Naive thymus-derived CD4-positive, alpha-beta T cell (primary cell): ENCODE measurements at regions of chr2 and their contacts with region 1.

Region 1: GRCh38 chr2:203782262-203782976 is 76.0 kb downstream of the CD28 start:
- DNase-seq: peak in 8 of 9 donors; percentile 46 to 73 (median 64)
- ATAC-seq: peak; percentile 92
- H3K4me3 ChIP-seq: no peak overlapping the region
- H3K4me3 Mint-ChIP-seq: peak overlapping the region in 6 of 10 donors; percentile 39 to 63 (median 46)
- H3K27ac ChIP-seq: no peak overlapping the region
- H3K27ac Mint-ChIP-seq: peak overlapping the region; percentile 63 to 85 (median 81)
- H3K4me1 ChIP-seq: peaks cover 17 to 26% of the 10 kb centered on the region in 2 donors
- H3K4me1 Mint-ChIP-seq: peaks cover 11 to 64% (median 53%) of the 10 kb centered on the region in 7 donors
- H3K27me3 ChIP-seq: no peaks in the 10 kb centered on the region
- H3K27me3 Mint-ChIP-seq: no peaks in the 10 kb centered on the region

Region 2: DNA sequence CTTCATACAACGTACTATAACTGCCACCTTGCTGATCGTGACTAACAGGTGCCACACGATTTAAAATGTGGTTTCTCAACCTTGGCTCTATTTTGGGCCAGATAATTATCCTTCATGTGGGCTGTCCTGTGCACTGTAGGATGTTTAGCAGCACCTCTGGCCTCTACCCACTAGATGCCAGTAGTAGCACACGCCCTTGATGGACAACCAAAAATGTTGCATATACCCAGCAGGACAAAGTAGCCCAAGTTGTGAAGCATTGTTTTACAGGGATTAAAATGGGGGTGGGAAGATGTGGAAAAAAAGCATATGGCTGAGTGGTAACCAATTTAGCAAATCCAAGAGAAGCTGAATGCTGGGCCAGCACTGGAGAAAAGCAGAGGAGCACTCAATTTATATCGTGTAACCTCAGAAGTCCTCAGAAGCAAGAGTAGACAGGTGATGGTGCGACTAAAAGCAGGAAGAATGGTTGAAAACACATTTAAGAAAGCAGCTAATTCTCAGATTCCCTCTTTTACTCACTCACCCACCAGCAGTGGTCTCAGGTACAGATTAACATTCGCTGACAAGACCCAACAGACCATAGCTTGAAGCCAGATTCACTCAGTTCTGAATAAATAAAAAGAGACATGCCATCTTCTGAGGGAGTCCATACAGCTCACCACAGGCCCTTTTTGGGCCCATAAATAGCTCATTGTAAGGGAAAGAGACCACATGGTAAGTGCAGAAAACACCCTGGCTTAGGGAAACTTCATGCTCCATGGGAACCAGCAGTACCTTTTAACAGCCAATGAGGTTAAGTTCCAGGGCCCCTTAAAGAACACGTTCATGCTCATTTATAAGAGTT is 297.9 kb before region 1 on chr2:
- CTCF ChIA-PET with region 1: interaction called, 6 read pairs
- POLR2A ChIA-PET with region 1: interaction called, 3 read pairs
- intact Hi-C with region 1: loop called (anchors 1 kb)
- DNase-seq: peak in 8 of 9 donors; percentile 20 to 69 (median 60)
- ATAC-seq: peak; percentile 92
- H3K4me3 ChIP-seq: no peak overlapping the region
- H3K4me3 Mint-ChIP-seq: peak overlapping the region in 5 of 10 donors; percentile 2 to 38 (median 14)
- H3K27ac ChIP-seq: no peak overlapping the region
- H3K27ac Mint-ChIP-seq: peak overlapping the region in 7 of 9 donors; percentile 3 to 88 (median 24)
- H3K4me1 ChIP-seq: peaks cover 0 to 7% of the 10 kb centered on the region in 2 donors
- H3K4me1 Mint-ChIP-seq: peaks cover 2 to 9% (median 7%) of the 10 kb centered on the region in 7 donors
- H3K27me3 ChIP-seq: no peaks in the 10 kb centered on the region
- H3K27me3 Mint-ChIP-seq: no peaks in the 10 kb centered on the region

Region 3: DNA sequence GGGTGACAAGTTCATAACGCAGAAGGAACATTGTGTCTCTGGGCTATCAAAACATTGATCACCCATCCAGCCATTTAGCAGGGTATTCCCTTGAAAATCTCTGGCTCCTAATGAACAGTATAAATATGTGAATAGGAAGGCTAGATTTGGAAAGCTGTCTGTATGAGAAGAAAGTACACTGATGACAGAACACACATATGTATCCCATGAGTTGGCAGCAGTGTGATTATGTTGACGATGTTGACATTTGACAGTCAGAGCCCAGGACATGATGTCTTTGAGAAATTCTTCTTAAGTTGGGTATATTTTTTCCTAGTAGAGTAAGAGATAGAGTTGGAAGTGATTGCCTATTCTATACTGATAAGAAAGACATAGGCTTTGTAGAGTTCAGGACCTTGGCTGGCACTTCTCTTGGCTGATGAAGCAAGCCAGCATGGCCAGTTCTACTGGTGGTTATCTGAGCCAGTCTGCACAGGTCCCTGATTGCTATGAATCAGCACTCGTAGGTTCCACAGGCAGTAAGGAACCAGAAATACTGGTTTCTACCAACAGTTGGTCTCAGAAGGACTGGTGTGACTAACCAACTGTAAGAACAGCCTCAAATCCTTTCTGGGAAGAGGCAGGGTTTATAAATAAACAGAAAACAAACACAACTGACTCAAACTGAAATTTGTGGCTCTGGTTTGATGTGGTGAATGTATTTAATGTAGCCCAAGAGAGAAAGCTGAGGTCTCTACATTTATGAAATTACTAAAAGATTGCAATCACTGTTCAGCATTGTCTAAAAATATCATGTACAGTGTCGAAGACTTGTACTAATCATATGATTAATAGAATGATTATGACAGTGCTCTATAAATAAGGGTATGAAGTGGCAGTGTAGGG is 203.4 kb before region 1 on chr2:
- CTCF ChIA-PET with region 1: no interaction called
- POLR2A ChIA-PET with region 1: no interaction called
- intact Hi-C with region 1: loop called in 1 of 2 experiments (anchors 10 kb)
- DNase-seq: peak in 1 of 9 donors; percentile 47
- ATAC-seq: no peak
- H3K4me3 ChIP-seq: no peak overlapping the region
- H3K4me3 Mint-ChIP-seq: peak overlapping the region in 1 of 10 donors; percentile 63
- H3K27ac ChIP-seq: no peak overlapping the region
- H3K27ac Mint-ChIP-seq: peak overlapping the region in 2 of 9 donors; percentile 8 to 47
- H3K4me1 ChIP-seq: peaks cover 0 to 2% of the 10 kb centered on the region in 2 donors
- H3K4me1 Mint-ChIP-seq: peaks cover 0 to 44% (median 0%) of the 10 kb centered on the region in 7 donors
- H3K27me3 ChIP-seq: no peaks in the 10 kb centered on the region
- H3K27me3 Mint-ChIP-seq: peaks cover 0 to 64% (median 0%) of the 10 kb centered on the region in 5 donors

Region 4: GRCh38 chr2:203718087-203718486 is 64.3 kb before region 1 on chr2:
- CTCF ChIA-PET with region 1: interaction called, 6 read pairs
- POLR2A ChIA-PET with region 1: interaction called, 5 read pairs
- intact Hi-C with region 1: loop called in 1 of 2 experiments (anchors 2 kb)
- DNase-seq: peak in 8 of 9 donors; percentile 45 to 62 (median 60)
- ATAC-seq: peak; percentile 49
- H3K4me3 ChIP-seq: peak overlapping the region; percentile 29
- H3K4me3 Mint-ChIP-seq: peak overlapping the region; percentile 23 to 91 (median 80)
- H3K27ac ChIP-seq: peak overlapping the region; percentile 71
- H3K27ac Mint-ChIP-seq: peak overlapping the region; percentile 90 to 99 (median 97)
- H3K4me1 ChIP-seq: peaks cover 89 to 95% of the 10 kb centered on the region in 2 donors
- H3K4me1 Mint-ChIP-seq: peaks cover 77 to 100% (median 95%) of the 10 kb centered on the region in 7 donors
- H3K27me3 ChIP-seq: no peaks in the 10 kb centered on the region
- H3K27me3 Mint-ChIP-seq: no peaks in the 10 kb centered on the region

Region 5: DNA sequence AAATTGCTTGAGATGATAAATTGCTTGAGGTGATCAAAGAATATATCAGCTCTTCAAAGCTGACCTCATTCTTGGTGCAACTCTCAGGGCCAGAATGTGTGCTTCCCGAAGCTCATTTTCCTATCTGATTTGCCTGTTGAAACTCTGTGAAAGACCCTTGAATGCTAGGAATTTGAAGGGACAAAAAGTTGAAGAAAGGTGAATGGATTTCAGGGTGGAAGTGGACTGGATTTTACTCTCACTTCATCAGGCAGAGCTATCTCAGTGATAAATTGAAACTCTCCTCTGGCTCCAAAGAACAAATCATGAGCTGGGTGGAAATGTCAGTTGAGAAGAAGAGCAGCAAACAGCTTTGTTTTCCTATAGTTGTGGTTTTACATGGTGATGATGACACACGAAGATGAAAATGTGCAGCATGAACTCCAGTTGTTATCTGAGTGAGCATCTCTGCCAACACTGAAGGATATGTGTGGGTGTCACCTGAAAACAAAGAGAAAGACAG is 41.6 kb before region 1 on chr2:
- CTCF ChIA-PET with region 1: interaction called, 4 read pairs
- POLR2A ChIA-PET with region 1: interaction called, 10 read pairs
- intact Hi-C with region 1: loop called (anchors 1 kb)
- DNase-seq: peak in 7 of 9 donors; percentile 68 to 94 (median 88)
- ATAC-seq: peak; percentile 93
- H3K4me3 ChIP-seq: no peak overlapping the region
- H3K4me3 Mint-ChIP-seq: peak overlapping the region; percentile 60 to 87 (median 70)
- H3K27ac ChIP-seq: peak overlapping the region; percentile 80
- H3K27ac Mint-ChIP-seq: peak overlapping the region; percentile 79 to 98 (median 96)
- H3K4me1 ChIP-seq: peaks cover 55 to 86% of the 10 kb centered on the region in 2 donors
- H3K4me1 Mint-ChIP-seq: peaks cover 57 to 93% (median 84%) of the 10 kb centered on the region in 7 donors
- H3K27me3 ChIP-seq: no peaks in the 10 kb centered on the region
- H3K27me3 Mint-ChIP-seq: no peaks in the 10 kb centered on the region

Region 6: DNA sequence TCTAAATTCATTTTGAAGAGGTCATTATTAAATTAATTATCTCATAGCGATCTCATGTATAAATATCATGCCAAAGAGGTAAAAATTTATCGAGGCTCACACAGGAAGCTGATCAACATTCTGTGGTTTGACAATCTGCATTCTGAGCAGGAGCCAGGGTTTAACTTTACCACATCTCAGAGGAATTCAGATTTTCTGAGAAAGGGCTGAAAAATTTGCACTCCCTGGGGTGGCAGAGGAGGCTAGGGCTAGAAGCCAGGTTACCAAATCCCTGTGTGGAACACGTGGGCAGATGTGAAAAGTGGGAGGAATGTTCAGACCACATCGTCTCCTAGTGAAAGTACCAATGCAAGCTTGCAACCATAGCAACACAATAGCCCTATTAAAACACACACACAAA is 21.7 kb after region 1 on chr2:
- CTCF ChIA-PET with region 1: interaction called, 5 read pairs
- POLR2A ChIA-PET with region 1: interaction called, 3 read pairs
- intact Hi-C with region 1: loop called in 1 of 2 experiments (anchors 2 kb)
- DNase-seq: peak in 8 of 9 donors; percentile 27 to 57 (median 42)
- ATAC-seq: peak; percentile 75
- H3K4me3 ChIP-seq: peak overlapping the region; percentile 12
- H3K4me3 Mint-ChIP-seq: peak overlapping the region; percentile 23 to 80 (median 63)
- H3K27ac ChIP-seq: peak overlapping the region; percentile 47
- H3K27ac Mint-ChIP-seq: peak overlapping the region; percentile 1 to 83 (median 76)
- H3K4me1 ChIP-seq: peaks cover 28 to 34% of the 10 kb centered on the region in 2 donors
- H3K4me1 Mint-ChIP-seq: peaks cover 27 to 83% (median 72%) of the 10 kb centered on the region in 7 donors
- H3K27me3 ChIP-seq: no peaks in the 10 kb centered on the region
- H3K27me3 Mint-ChIP-seq: peaks cover 0 to 3% (median 0%) of the 10 kb centered on the region in 5 donors

Region 7: DNA sequence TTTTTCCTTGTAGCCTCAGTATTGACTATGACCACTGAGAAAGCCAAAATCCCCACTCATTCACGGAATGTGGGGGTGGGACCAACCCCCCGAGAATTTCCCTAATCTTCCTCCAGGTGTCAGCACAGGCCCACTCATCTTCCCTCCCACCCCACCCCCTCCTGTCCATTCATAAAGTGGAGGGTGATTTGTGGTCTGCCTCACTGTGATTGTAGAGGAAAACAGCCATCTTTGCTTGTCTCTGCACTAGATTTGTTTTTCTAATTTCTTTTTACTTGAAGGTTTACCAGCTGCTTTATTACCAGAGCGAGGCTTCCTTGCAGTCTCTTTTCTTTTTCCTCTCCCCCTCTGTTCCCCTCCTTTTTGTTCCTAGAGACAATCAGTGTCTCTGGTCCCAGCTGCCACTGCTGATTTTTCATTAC is 325.9 kb after region 1 on chr2:
- CTCF ChIA-PET with region 1: no interaction called
- POLR2A ChIA-PET with region 1: no interaction called
- intact Hi-C with region 1: no loop called
- DNase-seq: peak in 8 of 9 donors; percentile 40 to 70 (median 56)
- ATAC-seq: peak; percentile 74
- H3K4me3 ChIP-seq: peak overlapping the region; percentile 21
- H3K4me3 Mint-ChIP-seq: peak overlapping the region in 9 of 10 donors; percentile 81 to 88 (median 83)
- H3K27ac ChIP-seq: no peak overlapping the region
- H3K27ac Mint-ChIP-seq: peak overlapping the region in 7 of 9 donors; percentile 7 to 96 (median 48)
- H3K4me1 ChIP-seq: peaks cover 30 to 31% of the 10 kb centered on the region in 2 donors
- H3K4me1 Mint-ChIP-seq: peaks cover 31 to 75% (median 48%) of the 10 kb centered on the region in 7 donors
- H3K27me3 ChIP-seq: no peaks in the 10 kb centered on the region
- H3K27me3 Mint-ChIP-seq: peaks cover 0 to 12% (median 0%) of the 10 kb centered on the region in 5 donors

Region 8: DNA sequence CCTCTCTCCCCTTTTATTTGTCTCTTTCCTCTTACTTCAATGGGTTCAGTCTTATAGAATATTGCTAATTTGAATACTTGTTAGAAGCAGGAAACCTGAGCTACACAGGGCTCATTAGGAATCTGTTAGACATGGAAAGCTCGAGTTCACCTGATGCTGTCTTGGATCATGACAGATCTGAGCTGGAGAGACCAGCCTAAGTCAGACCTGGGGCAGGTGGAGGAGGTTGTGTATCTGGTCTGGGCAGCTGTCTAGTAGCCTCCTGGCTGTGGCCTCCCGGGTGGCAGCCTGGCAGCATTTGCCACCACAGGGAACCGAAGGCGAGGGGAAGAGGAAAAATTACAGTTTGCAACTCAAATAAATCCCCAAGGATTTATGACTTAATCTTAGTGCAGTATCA is 340.0 kb after region 1 on chr2:
- CTCF ChIA-PET with region 1: no interaction called
- POLR2A ChIA-PET with region 1: no interaction called
- intact Hi-C with region 1: no loop called
- DNase-seq: no peak
- ATAC-seq: no peak
- H3K4me3 ChIP-seq: no peak overlapping the region
- H3K4me3 Mint-ChIP-seq: no peak overlapping the region
- H3K27ac ChIP-seq: no peak overlapping the region
- H3K27ac Mint-ChIP-seq: no peak overlapping the region
- H3K4me1 ChIP-seq: no peaks in the 10 kb centered on the region
- H3K4me1 Mint-ChIP-seq: peaks cover 0 to 2% (median 0%) of the 10 kb centered on the region in 7 donors
- H3K27me3 ChIP-seq: no peaks in the 10 kb centered on the region
- H3K27me3 Mint-ChIP-seq: peaks cover 0 to 35% (median 16%) of the 10 kb centered on the region in 5 donors